Heart left ventricle (tissue), 16 donors: ENCODE measurements at regions of chr9 and their contacts with region 1.

Region 1: GRCh38 chr9:69180670-69181069 is 6.6 kb downstream of the TJP2 start:
- DNase-seq: peak in 4 of 5 donors; percentile 30 to 66 (median 45)
- ATAC-seq: peak; percentile 62 to 95 (median 86)
- H3K4me3 ChIP-seq: no peak overlapping the region
- H3K27ac ChIP-seq: peak overlapping the region in 11 of 12 donors; percentile 24 to 74 (median 63)
- H3K4me1 ChIP-seq: peaks cover 12 to 67% (median 38%) of the 10 kb centered on the region in 12 donors
- H3K27me3 ChIP-seq: no peaks in the 10 kb centered on the region
- CTCF ChIP-seq: no peak
- POLR2A ChIP-seq: peak in 1 of 2 donors; percentile 23

Region 2: DNA sequence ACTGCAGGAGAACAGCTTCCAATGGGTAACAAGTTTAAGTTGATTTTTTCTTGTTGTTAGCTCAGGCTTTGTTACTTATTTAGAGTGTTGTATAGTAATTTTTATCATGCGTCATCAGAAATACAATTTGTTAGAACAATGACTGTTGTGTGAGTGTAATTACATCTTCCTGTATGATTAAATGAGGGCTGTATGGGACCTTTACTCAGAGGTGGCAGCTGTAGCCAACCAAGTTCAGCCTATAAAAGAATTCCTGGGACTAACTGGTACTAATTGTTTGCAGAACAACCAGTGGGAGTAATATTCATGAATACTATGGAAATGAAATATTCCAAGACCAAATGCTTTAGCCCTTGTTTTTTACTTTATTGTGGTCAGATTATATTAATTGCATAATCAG is 37.4 kb before region 1 on chr9:
- intact Hi-C with region 1: loop called in 2 of 10 experiments (anchors 5 kb)
- DNase-seq: peak in 2 of 5 donors; percentile 4 to 17
- ATAC-seq: peak in 1 of 4 donors; percentile 31
- H3K4me3 ChIP-seq: no peak overlapping the region
- H3K27ac ChIP-seq: peak overlapping the region in 4 of 12 donors; percentile 43 to 71 (median 56)
- H3K4me1 ChIP-seq: peaks cover 0 to 44% (median 19%) of the 10 kb centered on the region in 12 donors
- H3K27me3 ChIP-seq: no peaks in the 10 kb centered on the region
- CTCF ChIP-seq: no peak
- POLR2A ChIP-seq: no peak

Region 3: DNA sequence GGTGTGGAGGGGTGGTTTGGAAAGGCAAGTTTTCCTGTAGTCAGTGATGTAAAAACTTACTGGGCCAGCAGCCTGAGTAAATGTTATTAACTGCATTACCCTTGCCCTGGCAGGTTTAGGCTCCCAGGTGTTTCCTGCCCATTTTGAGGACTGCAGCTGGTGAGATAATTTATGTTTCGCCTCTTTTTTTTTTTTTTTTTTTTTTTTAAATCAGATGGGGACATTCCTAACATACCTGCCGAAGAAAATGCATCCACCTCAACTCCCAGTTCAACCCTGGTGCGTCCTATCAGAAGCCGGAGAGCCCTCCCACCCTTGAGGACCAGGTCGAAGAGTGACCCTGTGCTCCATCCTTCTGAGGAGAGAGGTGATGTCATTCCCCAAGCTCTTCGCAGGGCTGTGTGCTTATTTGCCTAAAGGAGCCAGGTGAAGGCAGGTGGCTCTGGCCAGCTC is 204.9 kb after region 1 on chr9:
- intact Hi-C with region 1: no loop called
- DNase-seq: no peak
- ATAC-seq: no peak
- H3K4me3 ChIP-seq: no peak overlapping the region
- H3K27ac ChIP-seq: peak overlapping the region in 1 of 12 donors; percentile 67
- H3K4me1 ChIP-seq: peaks cover 0 to 26% (median 9%) of the 10 kb centered on the region in 12 donors
- H3K27me3 ChIP-seq: no peaks in the 10 kb centered on the region
- CTCF ChIP-seq: no peak
- POLR2A ChIP-seq: no peak